PC-3 (cell line): ENCODE measurements at regions of chr5 and their contacts with region 1.

Region 1: GRCh38 chr5:41246376-41246775 is 33.0 kb upstream of the C6 start:
- DNase-seq: peak; percentile 97
- ATAC-seq: peak; percentile 99
- H3K4me3 ChIP-seq: no peak overlapping the region
- H3K27ac ChIP-seq: peak overlapping the region; percentile 40; the same call in 1 of the 2 replicates
- H3K4me1 ChIP-seq: peaks cover 14% of the 10 kb centered on the region
- H3K27me3 ChIP-seq: no peaks in the 10 kb centered on the region
- CTCF ChIP-seq: no peak

Region 2: GRCh38 chr5:40991168-40991980 is 255.0 kb before region 1 on chr5:
- CTCF ChIA-PET with region 1: no interaction called
- POLR2A ChIA-PET with region 1: no interaction called
- intact Hi-C with region 1: loop called (anchors 10 kb)
- DNase-seq: peak; percentile 96
- ATAC-seq: peak; percentile 80
- H3K4me3 ChIP-seq: peak overlapping the region; percentile 19; the same call in 1 of the 2 replicates
- H3K27ac ChIP-seq: peak overlapping the region; percentile 63
- H3K4me1 ChIP-seq: peaks cover 60% of the 10 kb centered on the region
- H3K27me3 ChIP-seq: no peaks in the 10 kb centered on the region
- CTCF ChIP-seq: no peak

Region 3: GRCh38 chr5:41012318-41012717 is 234.1 kb before region 1 on chr5:
- CTCF ChIA-PET with region 1: no interaction called
- POLR2A ChIA-PET with region 1: no interaction called
- intact Hi-C with region 1: no loop called
- DNase-seq: no peak
- ATAC-seq: no peak
- H3K4me3 ChIP-seq: no peak overlapping the region
- H3K27ac ChIP-seq: no peak overlapping the region
- H3K4me1 ChIP-seq: peaks cover 21% of the 10 kb centered on the region
- H3K27me3 ChIP-seq: no peaks in the 10 kb centered on the region
- CTCF ChIP-seq: no peak